ENCODE measurements at regions of chr4 and their contacts with region 1.

Region 1: GRCh38 chr4:15239866-15240265 is 188.0 kb upstream of the C1QTNF7 start:
- DNase-seq: no peak
- H3K4me3 ChIP-seq: no peak overlapping the region
- H3K27ac ChIP-seq: no peak overlapping the region
- H3K4me1 ChIP-seq: no peaks in the 10 kb centered on the region
- H3K27me3 ChIP-seq: no peaks in the 10 kb centered on the region
- CTCF ChIP-seq: no peak
- POLR2A ChIP-seq: no peak

Region 2: GRCh38 chr4:15457406-15458201 is 217.7 kb after region 1 on chr4:
- intact Hi-C with region 1: loop called (anchors 5 kb)
- DNase-seq: no peak
- H3K4me3 ChIP-seq: no peak overlapping the region
- H3K27ac ChIP-seq: no peak overlapping the region
- H3K4me1 ChIP-seq: peaks cover 7% of the 10 kb centered on the region
- H3K27me3 ChIP-seq: no peaks in the 10 kb centered on the region
- CTCF ChIP-seq: peak; percentile 73 to 82 (median 73)
- POLR2A ChIP-seq: no peak

Region 3: GRCh38 chr4:15765910-15766697 is 526.2 kb after region 1 on chr4:
- intact Hi-C with region 1: no loop called
- DNase-seq: no peak
- H3K4me3 ChIP-seq: no peak overlapping the region
- H3K27ac ChIP-seq: no peak overlapping the region
- H3K4me1 ChIP-seq: no peaks in the 10 kb centered on the region
- H3K27me3 ChIP-seq: no peaks in the 10 kb centered on the region
- CTCF ChIP-seq: no peak
- POLR2A ChIP-seq: no peak